ENCODE measurements at regions of chr7 and their contacts with region 1.

Region 1: GRCh38 chr7:24401628-24402593 is 117.9 kb downstream of the NPY start:
- DNase-seq: no peak
- H3K4me3 Mint-ChIP-seq: peak overlapping the region; percentile 4
- H3K27ac Mint-ChIP-seq: no peak overlapping the region
- H3K4me1 Mint-ChIP-seq: no peaks in the 10 kb centered on the region
- H3K27me3 Mint-ChIP-seq: peaks cover 48% of the 10 kb centered on the region
- CTCF ChIP-seq: peak; percentile 55

Region 2: DNA sequence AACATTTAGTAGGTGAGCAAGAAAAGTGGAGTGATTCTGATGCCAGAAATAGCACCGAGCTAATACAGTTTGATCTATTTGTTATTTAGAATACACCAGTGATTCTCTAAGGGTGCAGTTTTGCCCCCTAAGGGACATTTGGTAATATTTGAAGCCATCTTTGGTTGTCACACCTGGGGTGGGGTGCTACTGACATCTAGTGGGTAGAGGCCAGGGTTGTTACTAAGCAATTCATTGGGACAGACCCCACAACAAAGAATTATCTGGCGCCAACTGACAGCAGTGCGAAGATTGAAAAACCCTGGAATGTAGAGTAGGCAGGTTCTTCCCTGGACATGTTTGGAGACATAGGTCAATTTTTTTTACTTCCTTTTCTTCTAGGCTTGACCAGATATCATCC is 185.9 kb after region 1 on chr7:
- CTCF ChIA-PET with region 1: no interaction called
- intact Hi-C with region 1: loop called (anchors 1 kb)
- DNase-seq: peak; percentile 66
- H3K4me3 Mint-ChIP-seq: no peak overlapping the region
- H3K27ac Mint-ChIP-seq: no peak overlapping the region
- H3K4me1 Mint-ChIP-seq: peaks cover 28% of the 10 kb centered on the region
- H3K27me3 Mint-ChIP-seq: no peaks in the 10 kb centered on the region
- CTCF ChIP-seq: peak; percentile 77

Region 3: DNA sequence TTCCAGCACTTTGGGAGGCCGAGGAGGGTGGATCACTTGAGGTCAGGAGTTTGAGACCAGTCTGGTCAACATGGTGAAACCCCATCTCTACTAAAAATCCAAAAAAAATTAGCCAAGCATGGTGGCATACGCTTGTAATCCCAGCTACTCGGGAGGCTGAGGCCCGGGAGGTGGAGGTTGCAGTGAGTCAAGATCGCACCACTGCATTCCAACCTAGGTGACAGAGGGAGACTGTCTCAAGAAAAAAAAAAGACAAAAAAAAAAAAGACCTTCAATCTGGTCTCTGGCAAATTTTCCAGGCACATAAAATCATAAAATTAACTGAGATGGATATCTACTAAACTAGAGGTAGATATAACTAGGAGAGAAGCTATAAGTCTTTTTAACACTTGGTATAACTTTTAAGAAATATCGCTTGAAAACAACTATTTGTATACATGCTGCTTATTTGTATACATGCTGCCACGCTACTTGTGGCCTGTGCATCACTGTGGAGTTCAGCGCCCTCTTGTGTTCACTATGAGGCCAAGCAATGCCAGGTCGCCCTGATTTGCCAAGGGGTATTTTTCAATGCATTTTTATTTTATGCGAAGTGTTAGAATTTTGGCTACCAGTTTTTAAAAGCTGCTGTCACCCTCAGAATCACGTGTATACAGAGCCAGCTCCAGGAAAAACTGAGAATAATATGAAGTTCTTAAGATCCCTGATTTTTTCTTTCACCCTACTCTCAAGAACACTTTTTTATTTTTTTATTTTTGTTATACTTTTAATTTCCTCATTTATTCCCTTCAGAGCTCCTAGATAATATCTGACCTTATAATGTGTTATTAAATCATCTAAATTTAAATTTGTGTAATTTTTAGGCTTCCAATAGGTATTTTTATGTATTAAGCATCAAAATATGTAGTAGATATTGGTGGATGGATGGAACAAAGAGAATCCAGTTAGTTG is 696.5 kb after region 1 on chr7:
- CTCF ChIA-PET with region 1: interaction called, 4 read pairs
- intact Hi-C with region 1: loop called (anchors 1 kb)
- DNase-seq: peak; percentile 72
- H3K4me3 Mint-ChIP-seq: no peak overlapping the region
- H3K27ac Mint-ChIP-seq: no peak overlapping the region
- H3K4me1 Mint-ChIP-seq: peaks cover 32% of the 10 kb centered on the region
- H3K27me3 Mint-ChIP-seq: no peaks in the 10 kb centered on the region
- CTCF ChIP-seq: peak; percentile 91

Measured in Calu3 (cell line).